ENCODE measurements at regions of chr2 and their contacts with region 1.

Region 1: DNA sequence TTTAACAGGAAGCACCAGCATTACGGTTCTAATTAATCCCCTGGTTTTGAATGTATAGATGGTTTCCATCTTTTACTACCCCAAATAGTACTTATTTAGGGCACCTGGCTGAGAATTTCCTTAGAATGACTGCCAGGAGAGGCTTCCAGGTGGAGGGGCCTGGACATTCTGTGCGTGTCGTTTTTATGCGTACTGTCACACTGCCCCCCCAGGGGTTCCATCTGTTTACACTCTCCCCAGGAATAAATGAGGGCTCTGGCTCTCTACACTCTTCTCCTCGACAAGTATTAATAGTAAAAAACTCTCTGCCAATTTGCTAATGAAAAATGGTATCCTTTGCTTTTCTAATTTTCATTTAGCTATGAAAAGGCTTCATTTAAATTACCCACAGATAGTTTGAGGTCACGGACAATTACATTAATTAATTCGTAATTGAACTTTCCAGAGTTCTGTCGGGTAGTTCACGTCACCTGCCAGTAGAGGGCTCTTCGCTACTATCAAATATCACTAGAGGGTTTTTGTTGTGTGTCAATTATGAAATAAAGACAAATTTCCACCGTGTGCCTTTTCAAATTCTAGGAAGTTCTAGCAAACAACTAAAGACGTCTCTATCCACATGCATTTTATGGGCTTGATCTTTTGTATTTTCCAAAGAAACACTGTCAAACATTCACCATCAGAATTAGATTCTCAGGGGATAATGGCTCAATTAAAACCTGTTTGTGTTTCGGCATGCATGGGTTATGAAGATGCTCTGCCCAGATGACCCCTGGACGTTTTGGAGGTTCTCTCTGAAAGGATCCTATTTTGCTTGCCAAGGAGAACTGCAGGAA is 88.8 kb upstream of the ASB18 start:
- DNase-seq: peak; percentile 57
- ATAC-seq: peak; percentile 45
- H3K4me3 ChIP-seq: no peak overlapping the region
- H3K4me3 Mint-ChIP-seq: no peak overlapping the region
- H3K27ac ChIP-seq: no peak overlapping the region
- H3K27ac Mint-ChIP-seq: no peak overlapping the region
- H3K4me1 ChIP-seq: no peaks in the 10 kb centered on the region
- H3K4me1 Mint-ChIP-seq: no peaks in the 10 kb centered on the region
- H3K27me3 ChIP-seq: peaks cover 0 to 5% (median 0%) of the 10 kb centered on the region in 4 experiments
- H3K27me3 Mint-ChIP-seq: peaks cover 21% of the 10 kb centered on the region
- CTCF ChIP-seq: peak; percentile 98

Region 2: GRCh38 chr2:235263205-235264122 is 1089.5 kb before region 1 on chr2:
- CTCF ChIA-PET with region 1: no interaction called
- POLR2A ChIA-PET with region 1: no interaction called
- intact Hi-C with region 1: no loop called
- DNase-seq: no peak
- ATAC-seq: no peak
- H3K4me3 ChIP-seq: no peak overlapping the region
- H3K4me3 Mint-ChIP-seq: no peak overlapping the region
- H3K27ac ChIP-seq: no peak overlapping the region
- H3K27ac Mint-ChIP-seq: no peak overlapping the region
- H3K4me1 ChIP-seq: no peaks in the 10 kb centered on the region
- H3K4me1 Mint-ChIP-seq: no peaks in the 10 kb centered on the region
- H3K27me3 ChIP-seq: peaks cover 0 to 1% (median 0%) of the 10 kb centered on the region in 4 experiments
- H3K27me3 Mint-ChIP-seq: peaks cover 39% of the 10 kb centered on the region
- CTCF ChIP-seq: no peak

Region 3: GRCh38 chr2:235958221-235958931 is 394.6 kb before region 1 on chr2:
- CTCF ChIA-PET with region 1: no interaction called
- POLR2A ChIA-PET with region 1: no interaction called
- intact Hi-C with region 1: no loop called
- DNase-seq: no peak
- ATAC-seq: no peak
- H3K4me3 ChIP-seq: no peak overlapping the region
- H3K4me3 Mint-ChIP-seq: no peak overlapping the region
- H3K27ac ChIP-seq: no peak overlapping the region
- H3K27ac Mint-ChIP-seq: no peak overlapping the region
- H3K4me1 ChIP-seq: no peaks in the 10 kb centered on the region
- H3K4me1 Mint-ChIP-seq: no peaks in the 10 kb centered on the region
- H3K27me3 ChIP-seq: no peaks in the 10 kb centered on the region
- H3K27me3 Mint-ChIP-seq: no peaks in the 10 kb centered on the region
- CTCF ChIP-seq: no peak

Region 4: DNA sequence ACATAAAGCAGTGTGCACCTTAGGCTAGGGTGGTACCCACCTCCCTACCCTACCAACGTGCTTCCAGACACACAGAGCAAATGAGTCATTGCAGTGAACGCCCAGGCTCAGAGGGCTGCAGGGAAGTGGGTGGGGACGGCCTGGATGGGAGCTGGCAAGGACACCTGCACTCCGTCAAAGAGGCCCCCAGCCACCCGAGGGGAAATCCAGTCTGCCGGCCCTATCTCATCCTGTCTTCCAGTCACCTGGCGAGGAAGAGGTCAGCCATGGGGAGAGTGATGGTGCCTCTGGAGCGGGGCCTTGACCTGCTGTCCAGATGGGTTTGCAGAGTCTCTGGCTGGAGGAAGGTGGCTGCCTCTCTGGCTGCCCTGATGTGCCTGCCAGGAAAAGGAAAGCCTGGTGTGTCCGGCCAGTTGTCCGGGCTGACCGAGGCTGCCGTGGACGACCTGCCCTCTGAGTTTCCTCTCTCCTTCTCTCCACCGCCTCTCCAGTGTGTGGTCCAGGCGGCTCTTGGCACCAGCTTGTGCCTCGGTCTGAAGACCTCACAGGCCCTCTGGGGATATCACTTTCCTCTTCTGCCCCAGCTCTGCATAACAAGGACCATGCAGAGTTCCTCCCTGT is 523.0 kb after region 1 on chr2:
- CTCF ChIA-PET with region 1: no interaction called
- POLR2A ChIA-PET with region 1: no interaction called
- intact Hi-C with region 1: no loop called
- DNase-seq: no peak
- ATAC-seq: no peak
- H3K4me3 ChIP-seq: no peak overlapping the region
- H3K4me3 Mint-ChIP-seq: no peak overlapping the region
- H3K27ac ChIP-seq: no peak overlapping the region
- H3K27ac Mint-ChIP-seq: no peak overlapping the region
- H3K4me1 ChIP-seq: no peaks in the 10 kb centered on the region
- H3K4me1 Mint-ChIP-seq: peaks cover 5% of the 10 kb centered on the region
- H3K27me3 ChIP-seq: no peaks in the 10 kb centered on the region
- H3K27me3 Mint-ChIP-seq: peaks cover 4% of the 10 kb centered on the region
- CTCF ChIP-seq: no peak

Region 5: GRCh38 chr2:237026981-237027711 is 674.2 kb after region 1 on chr2:
- CTCF ChIA-PET with region 1: interaction called, 19 read pairs
- POLR2A ChIA-PET with region 1: no interaction called
- intact Hi-C with region 1: no loop called
- DNase-seq: peak; percentile 35
- ATAC-seq: no peak
- H3K4me3 ChIP-seq: no peak overlapping the region
- H3K4me3 Mint-ChIP-seq: no peak overlapping the region
- H3K27ac ChIP-seq: no peak overlapping the region
- H3K27ac Mint-ChIP-seq: no peak overlapping the region
- H3K4me1 ChIP-seq: no peaks in the 10 kb centered on the region
- H3K4me1 Mint-ChIP-seq: no peaks in the 10 kb centered on the region
- H3K27me3 ChIP-seq: peaks cover 0 to 5% (median 0%) of the 10 kb centered on the region in 4 experiments
- H3K27me3 Mint-ChIP-seq: peaks cover 12% of the 10 kb centered on the region
- CTCF ChIP-seq: peak; percentile 60

Region 6: DNA sequence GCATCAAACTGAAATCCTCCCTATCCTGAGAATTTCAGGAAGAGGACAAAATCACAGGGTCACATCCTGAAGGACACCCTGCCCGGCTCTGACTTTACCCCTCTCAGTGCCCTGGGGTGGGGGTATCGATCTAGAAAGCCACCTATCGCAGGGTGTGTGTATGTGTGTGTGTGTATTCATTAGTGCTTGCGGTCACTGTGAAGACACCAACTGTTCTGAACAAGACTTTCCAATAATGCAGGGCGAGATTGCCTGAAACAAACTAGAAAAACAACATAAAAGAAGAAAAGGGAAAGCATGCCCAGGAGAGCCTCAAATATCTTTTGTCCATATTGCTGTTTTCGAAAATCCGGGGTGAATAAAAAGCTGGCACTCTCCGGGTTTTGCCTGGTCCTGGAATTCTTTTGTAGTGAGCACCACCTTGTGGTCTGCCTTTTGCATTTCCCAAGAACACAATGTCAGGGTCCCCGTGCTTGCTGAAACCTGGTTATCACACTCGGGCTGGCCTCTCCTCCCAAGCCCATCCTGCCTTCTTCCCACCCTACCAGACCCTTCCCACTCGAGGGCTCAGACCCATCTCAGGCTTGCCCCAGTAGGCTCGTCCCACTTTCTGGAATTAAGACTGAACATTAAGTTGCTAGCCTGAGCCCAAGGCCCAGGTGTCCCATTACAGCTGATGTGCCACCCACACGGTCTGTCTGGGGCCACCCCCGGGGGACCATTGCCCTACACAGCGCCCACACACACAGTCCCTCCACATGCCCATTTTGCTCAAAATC is 707.7 kb after region 1 on chr2:
- CTCF ChIA-PET with region 1: interaction called, 34 read pairs
- POLR2A ChIA-PET with region 1: no interaction called
- intact Hi-C with region 1: loop called (anchors 1 kb)
- DNase-seq: peak; percentile 56
- ATAC-seq: no peak
- H3K4me3 ChIP-seq: no peak overlapping the region
- H3K4me3 Mint-ChIP-seq: no peak overlapping the region
- H3K27ac ChIP-seq: no peak overlapping the region
- H3K27ac Mint-ChIP-seq: no peak overlapping the region
- H3K4me1 ChIP-seq: peaks cover 21 to 33% of the 10 kb centered on the region in 2 donors
- H3K4me1 Mint-ChIP-seq: peaks cover 36% of the 10 kb centered on the region
- H3K27me3 ChIP-seq: peaks cover 0 to 3% (median 0%) of the 10 kb centered on the region in 4 experiments
- H3K27me3 Mint-ChIP-seq: peaks cover 9% of the 10 kb centered on the region
- CTCF ChIP-seq: peak; percentile 55

Region 7: GRCh38 chr2:237072067-237072931 is 719.3 kb after region 1 on chr2:
- CTCF ChIA-PET with region 1: interaction called, 29 read pairs
- POLR2A ChIA-PET with region 1: no interaction called
- intact Hi-C with region 1: no loop called
- DNase-seq: peak; percentile 70
- ATAC-seq: peak; percentile 47
- H3K4me3 ChIP-seq: no peak overlapping the region
- H3K4me3 Mint-ChIP-seq: no peak overlapping the region
- H3K27ac ChIP-seq: no peak overlapping the region
- H3K27ac Mint-ChIP-seq: no peak overlapping the region
- H3K4me1 ChIP-seq: no peaks in the 10 kb centered on the region
- H3K4me1 Mint-ChIP-seq: no peaks in the 10 kb centered on the region
- H3K27me3 ChIP-seq: no peaks in the 10 kb centered on the region
- H3K27me3 Mint-ChIP-seq: no peaks in the 10 kb centered on the region
- CTCF ChIP-seq: peak; percentile 99

Measured in B cell (primary cell).